ENCODE measurements at regions of chr22 and their contacts with region 1.

Region 1: DNA sequence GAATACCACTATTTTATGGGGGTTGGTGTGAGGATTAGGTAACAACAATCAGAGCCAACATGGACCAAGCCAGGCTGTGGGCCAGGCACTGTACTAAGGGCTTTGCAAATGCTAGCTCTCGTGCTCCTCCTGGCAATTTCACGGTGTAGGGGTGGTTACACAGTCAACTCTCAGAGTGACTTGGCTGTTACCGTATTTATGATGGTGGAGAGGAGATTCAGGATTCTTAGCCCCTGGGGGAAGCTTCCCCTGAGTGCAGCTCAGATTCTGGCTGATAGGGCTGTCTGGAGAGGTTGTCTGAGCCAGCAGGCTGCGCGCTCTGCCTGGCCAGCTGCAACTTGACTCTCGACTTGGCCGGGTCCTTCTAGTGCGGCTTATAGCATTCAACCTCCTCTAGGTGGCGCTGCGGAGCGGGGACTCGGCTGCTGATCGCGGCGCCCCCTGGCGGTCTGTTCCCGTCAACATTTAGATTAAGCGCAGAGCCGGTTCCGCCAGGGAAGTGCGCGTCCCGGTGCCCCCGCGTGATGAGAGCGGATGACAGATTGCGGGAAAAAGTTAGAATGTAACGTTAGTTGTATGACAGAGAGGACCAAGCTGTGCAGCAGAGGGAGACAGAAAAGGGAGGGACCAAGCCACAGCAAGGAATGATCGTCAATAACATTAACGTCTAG is 4.5 kb upstream of the NCF4 start:
- DNase-seq: peak; percentile 96
- ATAC-seq: peak; percentile 63
- H3K4me3 Mint-ChIP-seq: peak overlapping the region; percentile 38
- H3K27ac Mint-ChIP-seq: peak overlapping the region; percentile 56
- H3K4me1 Mint-ChIP-seq: peaks cover 75% of the 10 kb centered on the region
- H3K27me3 Mint-ChIP-seq: peaks cover under 1% of the 10 kb centered on the region

Region 2: GRCh38 chr22:36828815-36829214 is 27.4 kb before region 1 on chr22:
- CTCF ChIA-PET with region 1: interaction called, 11 read pairs
- POLR2A ChIA-PET with region 1: no interaction called
- DNase-seq: peak; percentile 46
- ATAC-seq: peak; percentile 38
- H3K4me3 Mint-ChIP-seq: no peak overlapping the region
- H3K27ac Mint-ChIP-seq: no peak overlapping the region
- H3K4me1 Mint-ChIP-seq: peaks cover 39% of the 10 kb centered on the region
- H3K27me3 Mint-ChIP-seq: peaks cover 36% of the 10 kb centered on the region

Region 3: GRCh38 chr22:36873680-36874537 is 17.7 kb after region 1 on chr22:
- CTCF ChIA-PET with region 1: interaction called, 14 read pairs
- POLR2A ChIA-PET with region 1: interaction called, 12 read pairs
- DNase-seq: peak; percentile 33
- ATAC-seq: peak; percentile 75
- H3K4me3 Mint-ChIP-seq: no peak overlapping the region
- H3K27ac Mint-ChIP-seq: peak overlapping the region; percentile 82
- H3K4me1 Mint-ChIP-seq: peaks cover 21% of the 10 kb centered on the region
- H3K27me3 Mint-ChIP-seq: no peaks in the 10 kb centered on the region

Region 4: DNA sequence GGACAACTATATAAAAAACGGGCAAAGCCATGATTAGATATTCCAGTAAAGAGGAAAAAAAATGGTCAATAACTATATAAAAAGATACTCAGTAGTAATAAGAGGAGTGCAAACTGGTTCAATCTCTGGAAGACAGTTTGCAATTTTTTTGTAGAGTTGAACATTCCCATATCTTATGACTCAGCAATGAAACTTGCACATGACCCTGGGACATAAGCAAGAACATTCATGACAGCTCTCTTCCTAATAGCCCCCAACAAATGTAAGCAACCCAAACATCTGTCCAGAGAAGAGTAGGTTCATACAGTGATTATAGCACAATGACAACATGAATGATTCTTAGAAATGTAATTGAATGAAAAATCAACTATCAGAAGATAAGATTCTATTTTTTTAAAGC is 35.4 kb after region 1 on chr22:
- CTCF ChIA-PET with region 1: interaction called, 16 read pairs
- POLR2A ChIA-PET with region 1: no interaction called
- DNase-seq: no peak
- ATAC-seq: no peak
- H3K4me3 Mint-ChIP-seq: no peak overlapping the region
- H3K27ac Mint-ChIP-seq: no peak overlapping the region
- H3K4me1 Mint-ChIP-seq: peaks cover 14% of the 10 kb centered on the region
- H3K27me3 Mint-ChIP-seq: peaks cover 8% of the 10 kb centered on the region

Region 5: DNA sequence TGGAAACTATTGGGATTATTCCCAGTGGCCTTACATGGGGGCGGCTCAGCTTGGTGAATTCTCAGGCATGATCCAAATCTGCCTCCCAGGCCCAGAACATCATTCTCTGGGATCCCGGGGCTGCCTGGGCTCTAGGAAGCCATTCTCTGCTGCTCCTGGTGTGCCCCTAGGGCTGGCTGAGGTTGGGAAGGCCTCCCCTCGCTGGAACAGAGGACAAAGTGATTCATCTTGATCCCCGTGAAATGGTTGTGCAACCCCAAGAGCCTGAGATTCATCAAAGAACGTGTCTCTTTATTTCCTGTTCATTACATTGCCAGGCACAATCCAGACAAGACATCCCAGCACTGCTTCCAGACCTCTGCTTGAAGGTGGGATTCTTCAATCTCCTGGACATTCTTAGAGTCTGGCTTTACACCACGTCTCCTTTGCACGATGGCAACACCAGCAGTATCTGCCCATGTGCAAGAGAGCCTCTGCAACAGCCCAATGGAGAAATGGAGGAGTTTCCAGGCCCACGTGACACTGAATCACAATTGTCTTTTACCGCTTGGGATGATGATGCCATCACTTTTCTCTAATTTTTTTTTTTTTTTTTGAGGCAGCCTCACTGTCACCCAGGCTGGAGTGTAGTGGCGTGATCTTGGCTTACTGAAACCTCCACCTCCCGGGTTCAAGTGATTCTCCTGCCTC is 110.7 kb after region 1 on chr22:
- CTCF ChIA-PET with region 1: interaction called, 17 read pairs
- POLR2A ChIA-PET with region 1: no interaction called
- DNase-seq: no peak
- ATAC-seq: no peak
- H3K4me3 Mint-ChIP-seq: no peak overlapping the region
- H3K27ac Mint-ChIP-seq: no peak overlapping the region
- H3K4me1 Mint-ChIP-seq: peaks cover 3% of the 10 kb centered on the region
- H3K27me3 Mint-ChIP-seq: peaks cover 4% of the 10 kb centered on the region